Activated T-helper 2 cell treated with anti-CD3 and anti-CD28 coated beads, Interferon-gamma antibody, Interleukin-2, Interleukin-4, amounts not matched to agents 10 μg/mL and 5 μg/mL and 100 μg/mL, durations not matched to agents 14 hours and 24 hours and 36 hours (primary cell): ENCODE measurements at regions of chr2 and their contacts with region 1.

Region 1: DNA sequence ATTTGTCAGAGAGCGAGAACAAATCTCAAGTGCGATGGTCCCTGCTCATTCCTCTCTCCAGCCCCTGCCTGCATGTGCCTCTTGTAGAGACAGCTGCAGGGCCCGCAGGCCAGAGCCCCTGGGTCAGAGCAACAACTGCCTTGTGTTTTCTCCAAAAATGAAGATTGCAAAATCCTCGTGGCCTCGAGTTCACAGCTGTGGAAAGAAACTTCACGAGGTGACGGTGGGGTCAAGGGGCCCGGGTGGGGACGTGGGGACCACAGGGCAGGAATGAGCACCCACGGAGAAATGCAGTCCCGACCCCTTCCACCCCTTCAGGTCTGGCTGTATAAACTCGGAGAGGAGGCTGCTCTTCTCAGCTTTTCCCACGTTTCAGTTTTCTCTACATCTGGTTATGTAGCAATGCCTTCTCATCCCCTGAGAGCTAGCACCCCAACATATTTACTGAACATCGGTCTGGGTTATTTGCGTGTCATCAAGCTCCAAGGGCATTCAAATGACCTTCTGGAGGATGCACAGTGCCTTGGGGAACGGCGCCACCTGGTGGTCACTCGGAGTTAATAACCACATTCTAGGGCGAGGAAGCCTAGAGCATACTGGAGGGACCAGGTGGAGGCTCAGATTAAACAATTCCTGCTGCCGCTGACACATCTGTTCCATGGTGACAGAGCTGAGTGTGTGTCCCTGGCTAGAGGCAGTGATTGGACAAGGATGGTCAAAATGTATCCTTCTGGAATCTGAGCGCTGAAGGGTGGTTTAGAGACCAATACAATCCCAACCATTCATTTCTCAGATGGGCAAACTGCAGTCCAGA is 91.4 kb upstream of the CYRIA start:
- DNase-seq: peak; percentile 48
- H3K4me3 Mint-ChIP-seq: no peak overlapping the region
- H3K27ac Mint-ChIP-seq: no peak overlapping the region
- H3K4me1 Mint-ChIP-seq: no peaks in the 10 kb centered on the region
- H3K27me3 Mint-ChIP-seq: peaks cover 8% of the 10 kb centered on the region

Region 2: DNA sequence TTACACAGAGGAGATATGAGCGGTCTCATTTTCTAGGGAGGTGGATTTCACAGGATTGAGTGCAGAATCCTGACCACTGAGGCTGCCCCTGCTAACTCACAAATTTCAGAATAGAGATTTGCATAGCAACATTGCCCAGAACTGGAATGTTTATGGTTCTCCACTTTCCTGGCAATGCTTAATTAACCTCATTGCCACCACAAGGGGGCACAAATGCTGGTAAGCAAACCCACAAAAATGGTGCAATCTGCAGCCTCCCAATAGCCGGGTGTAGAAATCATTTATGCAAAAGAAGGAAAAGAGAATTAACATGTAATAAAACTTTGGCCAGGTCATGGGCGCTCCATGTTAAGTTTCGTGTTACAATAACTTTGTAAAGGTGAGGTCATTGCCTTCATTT is 203.8 kb before region 1 on chr2:
- intact Hi-C with region 1: loop called (anchors 2 kb)
- DNase-seq: no peak
- H3K4me3 Mint-ChIP-seq: no peak overlapping the region
- H3K27ac Mint-ChIP-seq: no peak overlapping the region
- H3K4me1 Mint-ChIP-seq: no peaks in the 10 kb centered on the region
- H3K27me3 Mint-ChIP-seq: no peaks in the 10 kb centered on the region